Activated CD4-positive, alpha-beta memory T cell treated with anti-CD3 and anti-CD28 coated beads, Interleukin-2, amount 10 ng/mL, durations not matched to agents 7 days and 5 days (primary cell): ENCODE measurements at regions of chr18 and their contacts with region 1.

Region 1: DNA sequence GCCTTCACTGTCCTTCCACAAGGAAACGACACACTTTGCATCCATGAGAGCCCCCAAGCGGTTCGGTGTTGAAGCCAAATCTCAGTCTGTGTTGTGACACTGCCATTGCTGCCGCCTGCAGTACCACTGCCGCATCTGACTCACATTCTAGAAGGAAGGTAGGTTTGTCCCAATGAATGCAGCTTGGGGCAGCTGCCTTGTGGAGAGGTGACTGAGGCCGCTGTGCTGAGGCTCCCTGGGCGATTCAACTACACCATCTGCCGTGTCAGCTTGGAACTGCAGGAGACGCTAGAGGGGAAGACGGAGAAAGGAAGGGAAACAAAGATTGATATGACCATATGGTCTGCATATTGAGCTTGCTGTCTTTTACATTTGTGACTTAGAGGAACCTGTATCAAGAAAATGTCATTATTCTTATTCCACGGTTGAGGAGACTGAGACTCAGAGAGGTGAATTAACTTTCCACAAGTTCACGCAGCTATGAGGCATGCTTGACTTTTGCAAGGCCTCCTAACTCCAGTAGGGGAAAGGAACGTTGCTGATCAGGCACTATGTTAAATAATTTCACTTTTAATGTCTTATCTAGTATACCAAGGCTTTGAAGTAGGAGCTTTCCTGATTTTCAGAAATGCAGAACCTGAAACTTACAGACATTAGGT is 43.5 kb upstream of the LMAN1 start:
- DNase-seq: peak; percentile 75
- H3K4me3 Mint-ChIP-seq: no peak overlapping the region
- H3K27ac Mint-ChIP-seq: no peak overlapping the region
- H3K4me1 Mint-ChIP-seq: no peaks in the 10 kb centered on the region
- H3K27me3 Mint-ChIP-seq: peaks cover 5% of the 10 kb centered on the region

Region 2: DNA sequence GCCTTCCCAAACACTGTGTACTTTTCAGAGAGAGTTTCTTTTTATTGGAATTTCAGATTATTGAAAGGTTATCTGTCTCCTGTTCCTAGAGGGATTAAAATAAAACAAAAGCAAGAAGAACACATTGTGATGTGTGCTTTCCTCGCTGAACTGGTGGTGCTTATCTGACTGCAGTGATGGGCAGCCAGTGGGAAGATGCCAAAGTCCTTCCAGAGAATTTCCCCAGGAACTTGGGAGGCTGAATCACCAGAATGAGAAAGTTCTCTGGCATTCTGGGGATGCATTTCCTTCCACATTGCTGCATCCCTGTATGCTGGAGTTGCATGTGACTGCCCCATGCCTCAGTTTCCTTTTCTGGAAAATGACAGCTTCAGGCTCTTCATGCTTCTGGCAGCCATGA is 316.8 kb before region 1 on chr18:
- CTCF ChIA-PET with region 1: interaction called, 10 read pairs
- POLR2A ChIA-PET with region 1: no interaction called
- DNase-seq: no peak
- H3K4me3 Mint-ChIP-seq: no peak overlapping the region
- H3K27ac Mint-ChIP-seq: no peak overlapping the region
- H3K4me1 Mint-ChIP-seq: peaks cover 4% of the 10 kb centered on the region
- H3K27me3 Mint-ChIP-seq: peaks cover 18% of the 10 kb centered on the region

Region 3: GRCh38 chr18:59249205-59249774 is 153.3 kb before region 1 on chr18:
- CTCF ChIA-PET with region 1: interaction called, 58 read pairs
- POLR2A ChIA-PET with region 1: no interaction called
- DNase-seq: peak; percentile 44
- H3K4me3 Mint-ChIP-seq: no peak overlapping the region
- H3K27ac Mint-ChIP-seq: no peak overlapping the region
- H3K4me1 Mint-ChIP-seq: no peaks in the 10 kb centered on the region
- H3K27me3 Mint-ChIP-seq: peaks cover 48% of the 10 kb centered on the region

Region 4: DNA sequence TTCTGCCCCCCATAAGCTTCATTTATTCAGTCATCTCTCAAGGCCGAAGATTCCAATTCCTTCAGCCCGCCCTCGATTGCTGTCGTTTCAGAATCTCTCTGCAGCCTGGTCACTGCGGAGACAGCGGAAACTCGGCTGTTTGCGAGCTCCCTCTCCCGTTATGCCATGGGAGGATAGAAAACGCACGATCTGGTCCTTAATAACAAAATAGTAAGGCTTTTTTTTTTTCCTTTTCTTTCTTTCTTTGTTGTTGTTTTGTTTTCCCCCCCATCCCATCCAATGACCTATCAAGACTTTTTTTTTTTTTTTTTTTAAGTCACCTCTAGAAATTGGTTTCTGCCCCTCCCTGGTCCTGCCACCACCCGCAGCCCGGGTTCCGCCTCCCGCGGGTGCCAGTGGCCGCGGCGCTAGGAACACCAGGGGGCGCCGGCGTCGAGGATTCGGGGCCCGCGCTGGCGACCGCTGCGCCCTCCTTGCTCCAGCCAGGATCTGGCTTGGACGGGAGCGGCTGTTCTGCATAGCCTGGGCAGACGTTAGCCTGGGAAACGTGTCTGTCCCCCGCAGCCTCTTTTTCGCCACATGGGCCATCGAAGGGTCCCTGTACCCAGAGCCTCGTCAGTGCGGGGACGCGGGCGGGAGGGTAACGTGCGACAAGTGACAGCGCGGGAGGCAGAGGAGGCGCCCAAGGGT is 94.2 kb before region 1 on chr18:
- CTCF ChIA-PET with region 1: interaction called, 127 read pairs
- POLR2A ChIA-PET with region 1: interaction called, 5 read pairs
- DNase-seq: peak; percentile 70
- H3K4me3 Mint-ChIP-seq: peak overlapping the region; percentile 53
- H3K27ac Mint-ChIP-seq: no peak overlapping the region
- H3K4me1 Mint-ChIP-seq: peaks cover 4% of the 10 kb centered on the region
- H3K27me3 Mint-ChIP-seq: peaks cover 54% of the 10 kb centered on the region

Region 5: GRCh38 chr18:59318460-59319050 is 84.0 kb before region 1 on chr18 and contains the start of gene CPLX4:
- CTCF ChIA-PET with region 1: interaction called, 27 read pairs
- POLR2A ChIA-PET with region 1: no interaction called
- DNase-seq: no peak
- H3K4me3 Mint-ChIP-seq: no peak within 1 kb of the TSS
- H3K27ac Mint-ChIP-seq: no peak within 1 kb of the TSS
- H3K4me1 Mint-ChIP-seq: no peaks in the 10 kb centered on the region
- H3K27me3 Mint-ChIP-seq: peaks cover 25% of the 10 kb centered on the region
- total RNA-seq, gene CPLX4: not detected

Region 6: GRCh38 chr18:59358712-59359575 is 43.6 kb before region 1 on chr18 and contains the start of gene LMAN1:
- CTCF ChIA-PET with region 1: interaction called, 31 read pairs
- POLR2A ChIA-PET with region 1: interaction called, 7 read pairs
- DNase-seq: peak; percentile 94
- H3K4me3 Mint-ChIP-seq: peak within 1 kb of the TSS; percentile 93
- H3K27ac Mint-ChIP-seq: peak within 1 kb of the TSS; percentile 91
- H3K4me1 Mint-ChIP-seq: peaks cover 35% of the 10 kb centered on the region
- H3K27me3 Mint-ChIP-seq: no peaks in the 10 kb centered on the region
- total RNA-seq, gene LMAN1: 102 to 104 TPM

Region 7: GRCh38 chr18:59509481-59510442 is 107.2 kb after region 1 on chr18:
- CTCF ChIA-PET with region 1: no interaction called
- POLR2A ChIA-PET with region 1: no interaction called
- DNase-seq: no peak
- H3K4me3 Mint-ChIP-seq: no peak overlapping the region
- H3K27ac Mint-ChIP-seq: no peak overlapping the region
- H3K4me1 Mint-ChIP-seq: no peaks in the 10 kb centered on the region
- H3K27me3 Mint-ChIP-seq: peaks cover 6% of the 10 kb centered on the region